Calu3 (cell line): ENCODE measurements at regions of chr15 and their contacts with region 1.

Region 1: GRCh38 chr15:90071208-90071807 is 31.0 kb downstream of the IDH2 start:
- DNase-seq: peak; percentile 86
- H3K4me3 Mint-ChIP-seq: no peak overlapping the region
- H3K27ac Mint-ChIP-seq: no peak overlapping the region
- H3K4me1 Mint-ChIP-seq: no peaks in the 10 kb centered on the region
- H3K27me3 Mint-ChIP-seq: no peaks in the 10 kb centered on the region
- CTCF ChIP-seq: peak; percentile 77

Region 2: DNA sequence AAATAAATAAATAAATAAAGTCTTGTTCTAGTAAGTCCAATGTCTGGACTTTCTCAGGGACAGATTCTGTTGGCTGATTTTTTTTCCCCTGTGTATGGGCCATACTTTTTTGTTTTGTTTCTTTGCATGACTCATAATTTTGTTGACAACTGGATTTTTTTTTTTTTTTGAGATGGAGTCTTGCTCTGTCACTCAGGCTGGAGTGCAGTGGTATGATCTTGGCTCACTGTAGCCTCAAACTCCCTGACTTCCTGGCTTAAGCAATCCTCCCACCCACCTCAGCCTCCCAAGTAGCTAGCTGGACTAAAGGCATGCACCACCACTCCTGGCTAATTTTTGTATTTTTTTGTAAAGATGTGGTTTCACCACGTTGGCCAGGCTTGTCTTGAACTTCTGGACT is 457.1 kb before region 1 on chr15:
- CTCF ChIA-PET with region 1: no interaction called
- intact Hi-C with region 1: no loop called
- DNase-seq: no peak
- H3K4me3 Mint-ChIP-seq: no peak overlapping the region
- H3K27ac Mint-ChIP-seq: no peak overlapping the region
- H3K4me1 Mint-ChIP-seq: no peaks in the 10 kb centered on the region
- H3K27me3 Mint-ChIP-seq: no peaks in the 10 kb centered on the region
- CTCF ChIP-seq: no peak

Region 3: DNA sequence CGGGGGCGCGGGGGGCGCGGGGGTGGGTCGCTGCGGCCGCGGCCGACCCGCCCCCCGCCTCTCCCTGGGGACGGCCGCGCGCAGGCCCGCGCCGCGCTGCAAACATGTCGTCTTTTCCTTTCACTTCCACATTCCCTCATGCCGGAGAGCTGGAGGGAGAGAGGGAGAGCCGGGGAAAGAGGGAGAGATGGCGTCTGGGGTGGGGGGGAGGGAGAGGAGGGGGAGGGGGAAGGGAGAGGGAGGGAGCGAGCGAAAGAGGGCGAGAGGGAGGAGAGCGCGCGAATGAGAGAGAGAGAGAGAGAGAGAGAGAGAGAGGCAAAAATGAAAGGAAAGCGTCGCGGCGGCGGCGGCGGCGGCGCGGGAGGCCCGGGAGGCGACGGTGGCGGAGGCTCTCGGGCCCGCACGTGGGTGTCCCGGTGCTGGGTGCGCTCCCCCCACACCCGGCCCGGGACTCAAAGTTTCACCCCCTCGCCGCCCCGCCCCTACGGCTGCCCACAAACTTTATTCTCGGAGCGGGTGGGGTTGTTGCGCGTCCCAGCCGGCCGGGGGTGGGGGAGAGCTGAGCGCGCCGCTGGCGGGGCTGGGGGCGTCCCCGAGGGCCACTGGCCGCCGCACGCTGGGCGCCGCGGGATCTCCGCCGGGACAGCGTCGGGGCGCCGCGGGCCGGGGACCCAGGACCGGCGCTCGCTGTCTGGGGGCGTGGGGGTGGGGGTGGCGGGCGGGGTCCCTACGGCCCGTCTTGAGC is 69.5 kb before region 1 on chr15:
- CTCF ChIA-PET with region 1: interaction called, 5 read pairs
- intact Hi-C with region 1: loop called (anchors 2 kb)
- DNase-seq: peak; percentile 61
- H3K4me3 Mint-ChIP-seq: peak overlapping the region; percentile 71
- H3K27ac Mint-ChIP-seq: peak overlapping the region; percentile 81
- H3K4me1 Mint-ChIP-seq: peaks cover 37% of the 10 kb centered on the region
- H3K27me3 Mint-ChIP-seq: no peaks in the 10 kb centered on the region
- CTCF ChIP-seq: no peak

Region 4: DNA sequence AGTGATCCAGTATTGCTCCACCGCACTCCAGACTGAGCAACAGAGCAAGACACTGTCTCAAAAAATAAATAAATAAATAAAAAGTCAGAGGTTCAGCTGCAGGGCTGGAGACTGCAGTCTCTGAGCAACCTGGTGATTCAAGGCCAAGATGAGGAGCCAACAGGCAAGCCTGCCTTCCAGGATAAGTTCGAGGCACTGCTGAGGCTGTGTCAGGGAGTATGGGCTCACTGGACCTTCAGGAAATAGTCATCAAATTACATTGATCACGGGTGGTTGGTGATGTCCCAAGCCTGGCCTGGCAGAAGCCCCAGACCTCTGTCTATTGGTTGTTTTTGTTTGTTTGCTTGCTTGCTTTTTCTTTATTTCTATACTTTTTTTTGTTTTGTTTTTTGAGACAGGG is 10.5 kb before region 1 on chr15:
- CTCF ChIA-PET with region 1: no interaction called
- intact Hi-C with region 1: no loop called
- DNase-seq: no peak
- H3K4me3 Mint-ChIP-seq: no peak overlapping the region
- H3K27ac Mint-ChIP-seq: no peak overlapping the region
- H3K4me1 Mint-ChIP-seq: no peaks in the 10 kb centered on the region
- H3K27me3 Mint-ChIP-seq: no peaks in the 10 kb centered on the region
- CTCF ChIP-seq: no peak